ENCODE measurements at regions of chr4 and their contacts with region 1.

Region 1: GRCh38 chr4:15649914-15650545 is 5.1 kb downstream of the FBXL5 start:
- DNase-seq: no peak

Region 2: GRCh38 chr4:15479089-15479912 is 170.7 kb before region 1 on chr4:
- intact Hi-C with region 1: loop called in 1 of 2 experiments (anchors 2 kb)
- DNase-seq: peak; percentile 81

Region 3: GRCh38 chr4:16289897-16290554 is 640.0 kb after region 1 on chr4:
- intact Hi-C with region 1: no loop called
- DNase-seq: no peak

Measured in posterior vena cava (tissue), 2 donors.